Panc1 (cell line): ENCODE measurements at regions of chrX and their contacts with region 1.

Region 1: GRCh38 chrX:123736333-123736921 is 3.6 kb upstream of the THOC2 start:
- DNase-seq: no peak
- ATAC-seq: no peak
- H3K4me3 ChIP-seq: no peak overlapping the region
- H3K27ac ChIP-seq: no peak overlapping the region
- H3K4me1 ChIP-seq: peaks cover under 1% of the 10 kb centered on the region; the same call in 1 of the 2 replicates
- H3K27me3 ChIP-seq: no peaks in the 10 kb centered on the region
- CTCF ChIP-seq: no peak

Region 2: DNA sequence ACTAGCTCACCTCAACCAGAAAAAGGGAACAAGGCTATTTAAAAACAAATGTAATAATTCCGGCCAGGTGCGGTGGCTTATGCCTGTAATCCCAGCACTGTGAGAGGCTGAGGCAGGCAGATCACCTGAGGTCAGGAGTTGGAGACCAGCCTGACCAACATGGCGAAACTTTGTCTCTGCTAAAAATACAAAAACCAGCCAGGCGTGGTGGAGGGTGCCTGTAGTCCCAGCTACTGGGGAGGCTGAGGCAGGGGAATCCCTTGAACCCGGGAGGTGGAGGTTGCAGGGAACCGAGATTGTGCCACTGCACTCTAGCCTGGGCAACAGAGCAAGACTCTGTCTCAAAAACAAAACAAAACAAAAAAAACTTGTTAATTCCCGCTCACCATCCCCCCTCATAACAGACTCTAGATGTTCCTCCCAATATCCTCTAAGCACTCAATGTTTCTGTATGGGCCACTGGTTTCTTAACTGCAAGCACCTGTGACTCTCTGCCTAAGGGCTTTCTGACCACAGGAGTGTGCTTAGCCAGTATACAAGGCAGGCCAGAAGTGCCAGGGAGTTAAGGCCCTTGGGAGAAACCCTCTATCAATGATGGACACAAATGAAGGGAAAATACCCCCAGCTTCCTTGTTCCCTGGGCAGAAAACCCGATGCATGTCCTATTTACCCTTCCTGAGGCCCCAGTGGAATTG is 17.4 kb after region 1 on chrX:
- CTCF ChIA-PET with region 1: no interaction called
- POLR2A ChIA-PET with region 1: interaction called, 24 read pairs
- in situ Hi-C with region 1: no loop called
- intact Hi-C with region 1: no loop called
- DNase-seq: no peak
- ATAC-seq: no peak; the same call in 1 of the 2 replicates
- H3K4me3 ChIP-seq: no peak overlapping the region
- H3K27ac ChIP-seq: no peak overlapping the region
- H3K4me1 ChIP-seq: no peaks in the 10 kb centered on the region
- H3K27me3 ChIP-seq: no peaks in the 10 kb centered on the region
- CTCF ChIP-seq: no peak